ENCODE measurements at regions of chr11 and their contacts with region 1.

Region 1: GRCh38 chr11:111938687-111939160 is 1.6 kb downstream of the DIXDC1 start:
- DNase-seq: no peak
- H3K4me3 Mint-ChIP-seq: peak overlapping the region; percentile 89
- H3K27ac Mint-ChIP-seq: peak overlapping the region; percentile 95
- H3K4me1 Mint-ChIP-seq: peaks cover 60% of the 10 kb centered on the region
- H3K27me3 Mint-ChIP-seq: no peaks in the 10 kb centered on the region

Region 2: DNA sequence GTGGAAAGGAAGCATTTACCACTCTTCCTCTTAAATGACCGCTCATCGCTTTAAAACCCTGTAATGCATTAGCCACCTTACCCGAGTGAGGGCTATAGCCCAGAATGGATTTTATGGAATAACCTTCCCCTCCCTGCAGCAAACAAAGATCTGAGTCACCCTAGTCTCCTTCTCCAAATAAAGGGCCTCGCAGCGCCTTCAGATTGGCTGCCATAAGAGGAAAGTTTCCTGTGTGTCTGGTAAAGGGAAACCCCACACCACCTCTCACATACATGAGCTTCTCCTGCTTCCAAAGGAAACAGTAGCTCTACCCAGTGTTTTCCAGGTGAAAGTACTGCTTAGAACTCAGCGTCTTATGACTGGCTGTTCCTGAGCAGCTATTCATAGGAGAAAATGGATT is 220.3 kb before region 1 on chr11:
- intact Hi-C with region 1: no loop called
- DNase-seq: no peak
- H3K4me3 Mint-ChIP-seq: no peak overlapping the region
- H3K27ac Mint-ChIP-seq: no peak overlapping the region
- H3K4me1 Mint-ChIP-seq: peaks cover 1% of the 10 kb centered on the region
- H3K27me3 Mint-ChIP-seq: no peaks in the 10 kb centered on the region

Region 3: DNA sequence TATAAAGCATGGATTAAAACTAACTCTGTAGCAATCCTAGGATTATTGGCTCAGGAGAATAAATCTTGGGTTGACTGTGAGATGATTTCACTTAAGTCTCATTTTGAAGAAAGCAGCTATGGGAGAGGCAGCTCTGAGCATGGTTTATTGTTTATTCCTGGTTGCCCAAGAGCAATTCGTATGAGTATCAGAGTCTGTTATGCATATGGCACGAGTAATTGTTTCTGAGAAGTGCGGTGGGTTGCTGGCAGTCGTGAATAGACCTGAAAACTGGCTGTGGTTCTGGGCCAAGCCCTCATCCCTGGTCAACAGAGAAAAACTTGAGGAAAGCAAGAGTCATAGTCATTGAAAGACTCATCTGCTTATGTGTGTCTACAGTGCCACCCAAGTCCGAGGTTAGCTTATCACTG is 25.2 kb after region 1 on chr11:
- intact Hi-C with region 1: loop called (anchors 1 kb)
- DNase-seq: no peak
- H3K4me3 Mint-ChIP-seq: no peak overlapping the region
- H3K27ac Mint-ChIP-seq: peak overlapping the region; percentile 61
- H3K4me1 Mint-ChIP-seq: peaks cover 4% of the 10 kb centered on the region
- H3K27me3 Mint-ChIP-seq: no peaks in the 10 kb centered on the region

Region 4: DNA sequence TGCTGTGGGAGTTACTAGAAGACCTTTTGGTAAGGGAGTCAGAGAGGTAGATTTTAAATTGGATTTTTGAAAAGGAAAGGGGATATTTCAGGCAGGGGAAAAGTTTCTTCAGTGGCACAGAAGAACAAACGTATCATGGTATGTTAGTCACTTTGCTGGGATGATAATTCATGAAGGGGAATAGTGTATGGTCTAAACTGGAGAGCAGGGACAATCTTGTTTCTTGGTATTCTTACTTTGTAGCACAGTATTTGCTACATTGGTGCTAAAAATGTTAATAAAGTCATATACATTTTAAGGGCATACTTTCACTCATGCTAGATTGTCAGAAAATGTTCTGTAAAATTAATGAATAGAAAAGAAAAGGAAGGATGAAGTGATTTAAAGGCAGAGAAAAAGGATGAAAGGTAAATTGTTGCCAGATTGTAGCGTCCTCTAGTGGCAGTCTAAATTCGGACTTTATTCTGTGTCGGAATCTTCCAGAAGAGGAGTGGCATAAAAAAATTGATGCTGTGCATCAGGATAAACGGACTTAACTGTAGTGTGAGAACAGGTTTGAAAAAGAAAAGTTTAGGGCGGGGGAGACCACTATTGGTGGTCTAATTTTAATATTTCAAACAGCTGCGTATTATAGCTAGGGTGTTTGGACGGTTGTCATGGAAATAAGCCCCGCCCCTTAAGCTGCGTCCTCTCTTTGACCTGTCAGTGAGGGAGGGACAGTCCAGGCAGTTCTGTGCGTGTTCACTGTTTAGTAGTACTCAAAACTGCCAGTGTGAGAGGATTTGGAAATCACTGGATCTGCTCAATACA is 236.3 kb after region 1 on chr11 and contains the start of gene BCO2:
- intact Hi-C with region 1: loop called (anchors 10 kb)
- DNase-seq: peak; percentile 38
- H3K4me3 Mint-ChIP-seq: peak within 1 kb of the TSS; percentile 64
- H3K27ac Mint-ChIP-seq: peak within 1 kb of the TSS; percentile 30
- H3K4me1 Mint-ChIP-seq: peaks cover 8% of the 10 kb centered on the region
- H3K27me3 Mint-ChIP-seq: peaks cover 27% of the 10 kb centered on the region
- total RNA-seq, gene BCO2: 1.2 and 1.4 TPM in 2 replicates

Region 5: GRCh38 chr11:112280268-112281126 is 341.8 kb after region 1 on chr11:
- intact Hi-C with region 1: loop called (anchors 10 kb)
- DNase-seq: peak; percentile 60
- H3K4me3 Mint-ChIP-seq: peak overlapping the region; percentile 85
- H3K27ac Mint-ChIP-seq: peak overlapping the region; percentile 59
- H3K4me1 Mint-ChIP-seq: peaks cover 25% of the 10 kb centered on the region
- H3K27me3 Mint-ChIP-seq: no peaks in the 10 kb centered on the region

Measured in activated T-helper 2 cell treated with anti-CD3 and anti-CD28 coated beads, Interferon-gamma antibody, Interleukin-2, Interleukin-4, amounts not matched to agents 10 μg/mL and 5 μg/mL and 100 μg/mL, durations not matched to agents 14 hours and 24 hours and 36 hours (primary cell).